ENCODE measurements at regions of chr9 and their contacts with region 1.

Region 1: DNA sequence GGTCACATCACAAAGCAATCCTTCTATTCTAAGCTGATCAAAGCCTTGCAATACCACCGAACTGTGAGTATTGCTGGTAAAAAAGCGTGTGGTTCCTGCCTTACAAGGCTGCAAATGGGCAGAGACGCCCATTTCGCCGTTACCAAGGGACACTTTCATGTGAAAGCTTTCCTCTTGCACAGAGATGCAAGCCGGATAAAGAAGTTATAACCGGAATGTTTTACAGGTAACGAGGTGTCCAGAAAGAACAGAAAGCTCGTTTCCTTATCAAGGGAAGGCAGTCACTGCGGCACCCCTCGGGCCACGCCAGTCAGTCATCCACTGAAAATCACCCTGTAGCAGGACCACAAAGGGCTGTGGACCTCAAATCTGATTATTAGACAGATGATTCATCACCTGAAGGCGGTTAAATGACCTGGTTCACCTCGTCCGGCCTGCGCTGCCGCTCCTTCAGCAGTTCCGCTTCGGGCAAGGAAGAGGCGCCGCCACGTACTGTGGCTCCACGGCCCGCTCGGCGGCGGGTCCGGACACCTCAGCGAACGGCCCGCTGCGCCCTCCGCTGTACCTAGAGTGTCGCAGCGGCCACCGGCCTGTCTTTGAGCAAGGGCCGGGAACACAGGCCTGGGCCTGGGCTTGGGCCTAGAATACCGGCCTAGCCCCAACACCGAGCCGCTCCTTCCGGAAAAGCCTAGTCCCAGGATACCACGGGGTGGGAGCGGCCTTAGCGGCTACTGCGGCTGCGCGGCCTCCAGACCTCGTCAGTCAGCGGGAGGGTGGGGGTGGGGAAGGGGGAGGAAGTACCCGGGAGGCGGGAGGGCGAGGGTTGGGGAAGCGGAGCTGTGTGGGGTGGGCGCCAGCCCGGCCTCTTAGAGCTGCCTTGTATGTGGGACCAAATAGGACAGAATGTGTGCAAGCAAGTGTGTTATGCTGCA is at the start of gene KLHL9:
- DNase-seq: peak; percentile 86 to 88 (median 88)
- H3K4me3 ChIP-seq: peak within 1 kb of the TSS; percentile 80 to 96
- H3K4me3 Mint-ChIP-seq: peak within 1 kb of the TSS; percentile 89 to 97 (median 94)
- H3K27ac ChIP-seq: peak within 1 kb of the TSS; percentile 98
- H3K27ac Mint-ChIP-seq: peak within 1 kb of the TSS; percentile 95 to 98 (median 97)
- H3K4me1 ChIP-seq: peaks cover 59% of the 10 kb centered on the region
- H3K4me1 Mint-ChIP-seq: peaks cover 37 to 69% (median 49%) of the 10 kb centered on the region in 4 donors
- H3K27me3 ChIP-seq: no peaks in the 10 kb centered on the region
- H3K27me3 Mint-ChIP-seq: peaks cover 0 to 3% of the 10 kb centered on the region in 2 donors
- total RNA-seq, gene KLHL9: 38.7 to 40.1 TPM

Region 2: GRCh38 chr9:21357479-21358460 is 22.8 kb after region 1 on chr9:
- CTCF ChIA-PET with region 1: interaction called, 3 read pairs
- POLR2A ChIA-PET with region 1: interaction called, 17 read pairs
- intact Hi-C with region 1: loop called (anchors 2 kb)
- DNase-seq: peak in 4 of 5 donors; percentile 24 to 34 (median 25)
- H3K4me3 ChIP-seq: no peak overlapping the region
- H3K4me3 Mint-ChIP-seq: peak overlapping the region; percentile 68 to 80 (median 78)
- H3K27ac ChIP-seq: no peak overlapping the region
- H3K27ac Mint-ChIP-seq: peak overlapping the region; percentile 36 to 92 (median 87)
- H3K4me1 ChIP-seq: peaks cover 15% of the 10 kb centered on the region
- H3K4me1 Mint-ChIP-seq: peaks cover 10 to 20% (median 15%) of the 10 kb centered on the region in 4 donors
- H3K27me3 ChIP-seq: peaks cover 5% of the 10 kb centered on the region
- H3K27me3 Mint-ChIP-seq: peaks cover 3% of the 10 kb centered on the region in 2 donors

Region 3: GRCh38 chr9:21381448-21382339 is 46.7 kb after region 1 on chr9:
- CTCF ChIA-PET with region 1: no interaction called
- POLR2A ChIA-PET with region 1: no interaction called
- intact Hi-C with region 1: no loop called
- DNase-seq: peak in 4 of 5 donors; percentile 18 to 41 (median 24)
- H3K4me3 ChIP-seq: no peak overlapping the region
- H3K4me3 Mint-ChIP-seq: peak overlapping the region in 7 of 8 donors; percentile 20 to 69 (median 53)
- H3K27ac ChIP-seq: no peak overlapping the region
- H3K27ac Mint-ChIP-seq: peak overlapping the region in 3 of 7 donors; percentile 14 to 30 (median 16)
- H3K4me1 ChIP-seq: peaks cover 8% of the 10 kb centered on the region
- H3K4me1 Mint-ChIP-seq: peaks cover 12 to 18% (median 12%) of the 10 kb centered on the region in 4 donors
- H3K27me3 ChIP-seq: peaks cover 10% of the 10 kb centered on the region
- H3K27me3 Mint-ChIP-seq: peaks cover 17 to 27% of the 10 kb centered on the region in 2 donors

Region 4: GRCh38 chr9:21402386-21403251 is 67.7 kb after region 1 on chr9:
- CTCF ChIA-PET with region 1: interaction called, 18 read pairs
- POLR2A ChIA-PET with region 1: no interaction called
- intact Hi-C with region 1: no loop called
- DNase-seq: no peak
- H3K4me3 ChIP-seq: no peak overlapping the region
- H3K4me3 Mint-ChIP-seq: peak overlapping the region; percentile 28 to 77 (median 70)
- H3K27ac ChIP-seq: no peak overlapping the region
- H3K27ac Mint-ChIP-seq: no peak overlapping the region
- H3K4me1 ChIP-seq: peaks cover 9% of the 10 kb centered on the region
- H3K4me1 Mint-ChIP-seq: peaks cover 3 to 12% (median 7%) of the 10 kb centered on the region in 4 donors
- H3K27me3 ChIP-seq: peaks cover 11% of the 10 kb centered on the region
- H3K27me3 Mint-ChIP-seq: peaks cover 34% of the 10 kb centered on the region in 2 donors

Region 5: GRCh38 chr9:21796768-21797167 is 461.8 kb after region 1 on chr9:
- CTCF ChIA-PET with region 1: no interaction called
- POLR2A ChIA-PET with region 1: no interaction called
- intact Hi-C with region 1: no loop called
- DNase-seq: no peak
- H3K4me3 ChIP-seq: no peak overlapping the region
- H3K4me3 Mint-ChIP-seq: no peak overlapping the region
- H3K27ac ChIP-seq: no peak overlapping the region
- H3K27ac Mint-ChIP-seq: no peak overlapping the region
- H3K4me1 ChIP-seq: peaks cover 8% of the 10 kb centered on the region
- H3K4me1 Mint-ChIP-seq: peaks cover 4 to 7% (median 7%) of the 10 kb centered on the region in 4 donors
- H3K27me3 ChIP-seq: peaks cover 6% of the 10 kb centered on the region
- H3K27me3 Mint-ChIP-seq: peaks cover 10 to 13% of the 10 kb centered on the region in 2 donors

Measured in CD4-positive, alpha-beta memory T cell (primary cell).